GM10248 (cell line): ENCODE measurements at regions of chr9 and their contacts with region 1.

Region 1: DNA sequence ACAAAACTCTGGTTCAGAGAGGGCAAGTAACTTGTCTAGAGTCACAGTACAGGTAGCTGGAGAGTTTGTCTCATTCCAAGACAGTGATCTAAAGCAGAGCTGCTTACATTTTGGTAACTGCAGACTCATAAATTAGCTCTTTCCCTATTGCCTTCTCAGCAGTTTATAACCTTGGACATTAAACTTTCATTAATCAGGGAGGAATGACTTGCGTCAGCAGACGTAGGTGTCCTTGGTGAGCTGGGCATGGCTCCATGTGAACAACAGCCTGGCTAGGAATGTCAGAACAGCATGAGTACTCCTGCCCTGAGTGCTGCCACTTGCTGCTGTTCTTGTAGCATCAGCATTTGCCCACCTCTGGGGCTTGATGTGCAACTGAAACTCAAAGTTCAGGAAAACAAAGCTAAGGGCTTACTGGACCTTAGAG is 2.2 kb upstream of the ALDOB start:
- DNase-seq: no peak
- CTCF ChIP-seq: no peak

Region 2: GRCh38 chr9:101427337-101427736 is 10.5 kb before region 1 on chr9:
- CTCF ChIA-PET with region 1: interaction called, 14 read pairs
- POLR2A ChIA-PET with region 1: no interaction called
- DNase-seq: no peak
- CTCF ChIP-seq: no peak